ENCODE measurements at regions of chr16 and their contacts with region 1.

Region 1: GRCh38 chr16:58000706-58001676 is at the start of gene USB1:
- DNase-seq: peak; percentile 89
- ATAC-seq: peak; percentile 79
- H3K4me3 Mint-ChIP-seq: peak within 1 kb of the TSS; percentile 91
- H3K27ac Mint-ChIP-seq: peak within 1 kb of the TSS; percentile 80
- H3K4me1 Mint-ChIP-seq: peaks cover 41% of the 10 kb centered on the region
- H3K27me3 Mint-ChIP-seq: no peaks in the 10 kb centered on the region
- total RNA-seq, gene USB1: 37.3 to 38.5 TPM

Region 2: GRCh38 chr16:57265850-57266530 is 735.0 kb before region 1 on chr16:
- CTCF ChIA-PET with region 1: no interaction called
- POLR2A ChIA-PET with region 1: no interaction called
- intact Hi-C with region 1: no loop called
- DNase-seq: no peak
- ATAC-seq: no peak
- H3K4me3 Mint-ChIP-seq: no peak overlapping the region
- H3K27ac Mint-ChIP-seq: peak overlapping the region; percentile 59
- H3K4me1 Mint-ChIP-seq: peaks cover 46% of the 10 kb centered on the region
- H3K27me3 Mint-ChIP-seq: no peaks in the 10 kb centered on the region

Region 3: GRCh38 chr16:57447186-57447962 is 553.6 kb before region 1 on chr16 and contains the starts of genes CIAPIN1 and COQ9:
- CTCF ChIA-PET with region 1: no interaction called
- POLR2A ChIA-PET with region 1: no interaction called
- intact Hi-C with region 1: loop called in 1 of 2 experiments (anchors 5 kb)
- DNase-seq: peak; percentile 96
- ATAC-seq: peak; percentile 99
- H3K4me3 Mint-ChIP-seq: peak within 1 kb of the TSS; percentile 91
- H3K27ac Mint-ChIP-seq: peak within 1 kb of the TSS; percentile 85
- H3K4me1 Mint-ChIP-seq: peaks cover 32% of the 10 kb centered on the region
- H3K27me3 Mint-ChIP-seq: no peaks in the 10 kb centered on the region
- total RNA-seq, gene CIAPIN1: 41.7 to 42.6 TPM
- total RNA-seq, gene COQ9: 39.4 to 52.1 TPM

Region 4: GRCh38 chr16:57734925-57735754 is 265.9 kb before region 1 on chr16:
- CTCF ChIA-PET with region 1: interaction called, 3 read pairs
- POLR2A ChIA-PET with region 1: no interaction called
- intact Hi-C with region 1: loop called (anchors 1 kb)
- DNase-seq: peak; percentile 98
- ATAC-seq: peak; percentile 95
- H3K4me3 Mint-ChIP-seq: peak overlapping the region; percentile 92
- H3K27ac Mint-ChIP-seq: peak overlapping the region; percentile 96
- H3K4me1 Mint-ChIP-seq: peaks cover 22% of the 10 kb centered on the region
- H3K27me3 Mint-ChIP-seq: no peaks in the 10 kb centered on the region

Region 5: DNA sequence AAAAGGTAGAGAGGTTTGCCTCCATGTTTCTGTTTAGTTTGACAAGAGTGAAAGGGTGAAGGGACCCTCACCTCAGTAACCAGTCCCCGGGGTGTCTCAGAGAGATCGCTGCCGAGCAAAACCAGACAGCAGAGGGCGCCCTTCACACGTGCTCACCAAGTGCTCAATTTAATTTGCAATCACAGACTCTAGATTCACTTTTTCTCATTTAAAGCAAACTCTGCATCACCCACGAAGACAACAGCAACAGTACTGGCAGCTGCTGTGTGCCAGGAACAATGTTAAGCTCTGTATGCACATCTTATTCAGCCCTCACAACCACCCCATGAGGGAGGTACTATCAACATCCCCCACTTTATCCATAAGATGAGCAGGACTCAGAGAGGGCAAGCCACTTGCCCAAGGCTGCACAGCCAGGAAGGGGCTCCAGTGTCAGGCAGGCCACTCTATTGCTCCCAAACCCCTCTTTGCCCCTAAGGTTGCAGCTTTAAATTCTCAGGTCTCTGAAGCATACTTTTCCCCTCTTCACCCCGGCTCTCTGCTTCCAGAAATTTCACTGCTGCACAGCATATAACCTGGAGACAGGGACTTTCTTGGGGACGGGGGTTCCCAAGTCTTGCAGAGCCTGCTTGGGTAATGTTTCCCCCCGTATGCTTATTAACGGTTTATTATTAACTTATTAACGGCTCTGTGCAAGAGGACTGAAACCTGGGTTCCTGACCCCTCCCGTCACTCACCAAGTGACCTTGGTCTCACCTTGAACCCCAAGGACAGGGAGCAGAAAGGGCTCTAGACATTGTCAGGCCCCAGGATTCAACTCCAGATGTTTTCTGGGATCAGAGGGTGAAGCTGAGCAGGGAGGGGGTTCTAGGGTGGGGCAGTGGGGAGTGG is 101.0 kb before region 1 on chr16:
- CTCF ChIA-PET with region 1: interaction called, 9 read pairs
- POLR2A ChIA-PET with region 1: no interaction called
- intact Hi-C with region 1: loop called (anchors 1 kb)
- DNase-seq: peak; percentile 87
- ATAC-seq: peak; percentile 77
- H3K4me3 Mint-ChIP-seq: no peak overlapping the region
- H3K27ac Mint-ChIP-seq: no peak overlapping the region
- H3K4me1 Mint-ChIP-seq: peaks cover under 1% of the 10 kb centered on the region
- H3K27me3 Mint-ChIP-seq: peaks cover 8% of the 10 kb centered on the region

Region 6: GRCh38 chr16:57945740-57946138 is 55.3 kb before region 1 on chr16:
- CTCF ChIA-PET with region 1: no interaction called
- POLR2A ChIA-PET with region 1: no interaction called
- intact Hi-C with region 1: no loop called
- DNase-seq: no peak
- ATAC-seq: no peak
- H3K4me3 Mint-ChIP-seq: no peak overlapping the region
- H3K27ac Mint-ChIP-seq: no peak overlapping the region
- H3K4me1 Mint-ChIP-seq: no peaks in the 10 kb centered on the region
- H3K27me3 Mint-ChIP-seq: no peaks in the 10 kb centered on the region

Region 7: GRCh38 chr16:57959121-57959520 is 41.9 kb before region 1 on chr16:
- CTCF ChIA-PET with region 1: no interaction called
- POLR2A ChIA-PET with region 1: no interaction called
- intact Hi-C with region 1: no loop called
- DNase-seq: no peak
- ATAC-seq: no peak
- H3K4me3 Mint-ChIP-seq: no peak overlapping the region
- H3K27ac Mint-ChIP-seq: no peak overlapping the region
- H3K4me1 Mint-ChIP-seq: no peaks in the 10 kb centered on the region
- H3K27me3 Mint-ChIP-seq: no peaks in the 10 kb centered on the region

Region 8: DNA sequence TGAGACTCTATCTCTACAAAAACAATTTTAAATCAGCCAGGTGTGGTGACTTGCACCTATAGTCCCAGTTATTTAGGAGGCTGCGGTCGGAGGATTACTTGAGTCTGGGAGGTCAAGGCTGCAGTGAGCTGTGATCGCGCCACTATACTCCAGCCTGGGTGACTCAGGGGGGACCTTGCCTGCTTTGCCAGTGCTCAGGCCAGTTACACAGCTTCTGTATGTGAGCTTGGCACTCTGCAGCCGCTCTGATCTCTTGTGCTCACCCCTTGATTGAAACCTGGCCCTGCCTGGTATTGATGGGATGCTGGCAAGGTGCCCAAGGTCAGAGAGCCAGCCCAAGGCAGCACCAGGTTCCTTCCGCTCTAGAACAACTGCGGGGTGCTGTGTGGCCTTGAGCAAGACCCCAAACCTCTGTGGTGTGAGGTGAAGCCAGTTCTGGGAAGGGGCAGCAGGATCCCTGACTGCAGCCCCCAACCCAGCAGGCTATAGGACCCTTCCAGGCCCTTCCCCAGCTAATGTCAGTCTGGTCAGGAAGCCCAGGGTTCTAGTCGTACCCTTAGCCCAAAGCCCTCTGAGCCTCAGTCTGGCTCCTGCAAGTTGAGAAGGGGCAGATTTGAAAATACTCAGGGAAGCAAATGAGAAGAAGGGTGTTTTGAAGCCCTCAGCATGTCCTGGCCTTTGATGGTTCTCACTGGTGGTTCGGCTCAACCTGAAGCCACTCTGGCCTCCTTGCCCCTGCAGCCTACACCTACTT is 43.5 kb after region 1 on chr16:
- CTCF ChIA-PET with region 1: no interaction called
- POLR2A ChIA-PET with region 1: no interaction called
- intact Hi-C with region 1: no loop called
- DNase-seq: no peak
- ATAC-seq: no peak
- H3K4me3 Mint-ChIP-seq: no peak overlapping the region
- H3K27ac Mint-ChIP-seq: no peak overlapping the region
- H3K4me1 Mint-ChIP-seq: no peaks in the 10 kb centered on the region
- H3K27me3 Mint-ChIP-seq: no peaks in the 10 kb centered on the region

Region 9: GRCh38 chr16:58198022-58198683 is 197.2 kb after region 1 on chr16 and contains the start of gene CSNK2A2:
- CTCF ChIA-PET with region 1: no interaction called
- POLR2A ChIA-PET with region 1: no interaction called
- intact Hi-C with region 1: loop called in 1 of 2 experiments (anchors 1 kb)
- DNase-seq: peak; percentile 84
- ATAC-seq: peak; percentile 94
- H3K4me3 Mint-ChIP-seq: peak within 1 kb of the TSS; percentile 84
- H3K27ac Mint-ChIP-seq: peak within 1 kb of the TSS; percentile 74
- H3K4me1 Mint-ChIP-seq: peaks cover 34% of the 10 kb centered on the region
- H3K27me3 Mint-ChIP-seq: peaks cover 6% of the 10 kb centered on the region
- total RNA-seq, gene CSNK2A2: 85.9 to 92.2 TPM